GM10248 (cell line): ENCODE measurements at regions of chr6 and their contacts with region 1.

Region 1: GRCh38 chr6:143542888-143543287 is 31.4 kb upstream of the FUCA2 start:
- DNase-seq: no peak
- CTCF ChIP-seq: no peak

Region 2: GRCh38 chr6:143501851-143502250 is 41.0 kb before region 1 on chr6:
- CTCF ChIA-PET with region 1: no interaction called
- POLR2A ChIA-PET with region 1: no interaction called
- DNase-seq: no peak
- CTCF ChIP-seq: no peak

Region 3: DNA sequence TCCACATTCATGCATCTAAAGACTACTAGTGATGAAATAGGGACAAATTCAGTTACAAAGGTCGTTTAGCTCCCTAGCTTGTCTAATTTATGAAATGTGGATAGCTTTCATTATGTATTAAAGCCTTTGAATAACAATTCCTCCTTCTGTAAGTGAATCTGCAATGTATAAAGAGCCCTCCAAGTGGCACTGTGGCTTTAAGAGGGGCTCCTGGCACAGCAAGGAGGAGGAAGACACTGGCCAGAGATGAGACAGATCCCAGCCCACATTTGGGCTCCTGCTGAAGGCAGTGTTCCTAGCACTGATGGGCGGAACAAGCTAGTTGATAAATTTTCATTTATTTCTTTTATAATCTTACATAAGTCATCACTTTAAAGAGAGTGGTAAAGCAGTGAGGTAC is 13.8 kb before region 1 on chr6:
- CTCF ChIA-PET with region 1: interaction called, 11 read pairs
- POLR2A ChIA-PET with region 1: no interaction called
- DNase-seq: no peak
- CTCF ChIP-seq: no peak

Region 4: GRCh38 chr6:143556529-143556928 is 13.6 kb after region 1 on chr6:
- CTCF ChIA-PET with region 1: interaction called, 11 read pairs
- POLR2A ChIA-PET with region 1: no interaction called
- DNase-seq: no peak
- CTCF ChIP-seq: no peak

Region 5: DNA sequence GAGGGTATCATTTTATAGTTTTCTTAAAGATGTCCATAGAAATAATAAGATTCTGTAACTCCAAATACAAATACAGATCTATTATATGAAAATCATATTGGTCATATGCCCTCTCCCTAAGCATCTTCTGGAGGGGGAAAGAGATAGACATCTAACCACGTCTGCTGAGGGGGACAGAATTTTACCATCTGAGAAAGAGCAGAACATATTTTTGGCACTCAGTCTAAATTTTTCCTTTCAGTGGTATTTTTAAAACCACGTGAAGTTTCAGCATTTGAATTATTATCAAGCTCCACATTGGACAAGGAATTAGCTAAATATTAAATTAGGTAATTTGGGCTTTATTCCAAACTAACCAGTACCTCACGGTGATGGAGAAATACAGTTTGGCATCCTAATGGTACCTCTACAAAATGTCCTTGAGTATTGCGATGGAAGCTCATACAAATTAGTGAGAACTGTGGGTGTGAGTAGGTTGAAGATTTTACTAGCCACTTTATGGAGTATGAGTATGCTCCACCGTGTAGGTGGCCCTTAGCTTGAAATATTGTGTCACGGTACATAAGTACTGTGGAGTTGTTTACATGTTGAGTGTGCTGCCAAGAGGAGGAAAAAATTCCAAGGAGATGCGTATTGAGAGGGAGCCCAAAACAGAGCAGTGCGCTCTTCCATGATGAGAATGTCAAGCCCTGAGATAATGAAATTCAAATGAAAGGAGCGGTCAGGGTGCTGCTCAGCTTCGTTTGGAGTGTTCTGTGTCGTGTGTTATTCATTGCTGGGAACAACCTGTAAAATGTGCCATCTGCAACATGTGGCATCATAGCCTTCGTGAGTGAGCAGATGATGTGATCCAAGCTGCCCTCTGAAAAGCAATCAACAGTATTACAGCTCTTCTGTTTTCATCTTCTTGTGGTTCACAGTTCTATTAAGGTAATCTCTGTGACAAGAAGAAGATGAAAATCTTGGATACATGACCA is 86.5 kb after region 1 on chr6:
- CTCF ChIA-PET with region 1: no interaction called
- POLR2A ChIA-PET with region 1: no interaction called
- DNase-seq: no peak
- CTCF ChIP-seq: no peak